ENCODE measurements at regions of chr17 and their contacts with region 1.

Region 1: GRCh38 chr17:58172369-58173071 is 5.7 kb downstream of the OR4D2 start:
- DNase-seq: peak in 8 of 9 experiments; percentile 19 to 82 (median 44)
- ATAC-seq: peak; percentile 76
- H3K4me3 ChIP-seq: no peak overlapping the region
- H3K4me3 Mint-ChIP-seq: peak overlapping the region; percentile 38
- H3K27ac ChIP-seq: peak overlapping the region in 1 of 2 experiments; percentile 72
- H3K27ac Mint-ChIP-seq: peak overlapping the region; percentile 66
- H3K4me1 ChIP-seq: peaks cover 43% of the 10 kb centered on the region
- H3K4me1 Mint-ChIP-seq: peaks cover 45% of the 10 kb centered on the region
- H3K27me3 ChIP-seq: no peaks in the 10 kb centered on the region
- H3K27me3 Mint-ChIP-seq: peaks cover 4% of the 10 kb centered on the region
- CTCF ChIP-seq: peak; percentile 66

Region 2: DNA sequence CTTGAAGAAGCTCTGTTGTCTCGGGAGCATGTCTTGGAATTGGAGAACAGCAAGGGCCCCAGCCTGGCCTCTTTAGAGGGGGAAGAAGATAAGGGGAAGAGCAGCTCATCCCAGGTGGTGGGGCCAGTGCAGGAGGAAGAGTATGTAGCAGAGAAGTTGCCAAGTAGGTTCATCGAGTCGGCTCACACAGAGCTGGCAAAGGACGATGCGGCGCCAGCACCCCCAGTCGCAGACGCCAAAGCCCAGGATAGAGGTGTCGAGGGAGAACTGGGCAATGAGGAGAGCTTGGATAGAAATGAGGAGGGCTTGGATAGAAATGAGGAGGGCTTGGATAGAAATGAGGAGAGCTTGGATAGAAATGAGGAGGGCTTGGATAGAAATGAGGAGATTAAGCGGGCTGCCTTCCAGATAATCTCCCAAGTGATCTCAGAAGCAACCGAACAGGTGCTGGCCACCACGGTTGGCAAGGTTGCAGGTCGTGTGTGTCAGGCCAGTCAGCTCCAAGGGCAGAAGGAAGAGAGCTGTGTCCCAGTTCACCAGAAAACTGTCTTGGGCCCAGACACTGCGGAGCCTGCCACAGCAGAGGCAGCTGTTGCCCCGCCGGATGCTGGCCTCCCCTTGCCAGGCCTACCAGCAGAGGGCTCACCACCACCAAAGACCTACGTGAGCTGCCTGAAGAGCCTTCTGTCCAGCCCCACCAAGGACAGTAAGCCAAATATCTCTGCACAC is 1066.2 kb before region 1 on chr17:
- CTCF ChIA-PET with region 1: no interaction called
- POLR2A ChIA-PET with region 1: no interaction called
- intact Hi-C with region 1: no loop called
- DNase-seq: no peak
- ATAC-seq: no peak
- H3K4me3 ChIP-seq: no peak overlapping the region
- H3K4me3 Mint-ChIP-seq: no peak overlapping the region
- H3K27ac ChIP-seq: no peak overlapping the region
- H3K27ac Mint-ChIP-seq: no peak overlapping the region
- H3K4me1 ChIP-seq: peaks cover 4% of the 10 kb centered on the region
- H3K4me1 Mint-ChIP-seq: peaks cover 17% of the 10 kb centered on the region
- H3K27me3 ChIP-seq: no peaks in the 10 kb centered on the region
- H3K27me3 Mint-ChIP-seq: no peaks in the 10 kb centered on the region
- CTCF ChIP-seq: no peak

Region 3: GRCh38 chr17:57855391-57856035 is 317.0 kb before region 1 on chr17:
- CTCF ChIA-PET with region 1: interaction called, 13 read pairs
- POLR2A ChIA-PET with region 1: interaction called, 3 read pairs
- intact Hi-C with region 1: loop called in 1 of 2 experiments (anchors 5 kb)
- DNase-seq: no peak
- ATAC-seq: no peak
- H3K4me3 ChIP-seq: no peak overlapping the region
- H3K4me3 Mint-ChIP-seq: no peak overlapping the region
- H3K27ac ChIP-seq: no peak overlapping the region
- H3K27ac Mint-ChIP-seq: no peak overlapping the region
- H3K4me1 ChIP-seq: peaks cover 15% of the 10 kb centered on the region
- H3K4me1 Mint-ChIP-seq: peaks cover 17% of the 10 kb centered on the region
- H3K27me3 ChIP-seq: no peaks in the 10 kb centered on the region
- H3K27me3 Mint-ChIP-seq: no peaks in the 10 kb centered on the region
- CTCF ChIP-seq: no peak

Region 4: DNA sequence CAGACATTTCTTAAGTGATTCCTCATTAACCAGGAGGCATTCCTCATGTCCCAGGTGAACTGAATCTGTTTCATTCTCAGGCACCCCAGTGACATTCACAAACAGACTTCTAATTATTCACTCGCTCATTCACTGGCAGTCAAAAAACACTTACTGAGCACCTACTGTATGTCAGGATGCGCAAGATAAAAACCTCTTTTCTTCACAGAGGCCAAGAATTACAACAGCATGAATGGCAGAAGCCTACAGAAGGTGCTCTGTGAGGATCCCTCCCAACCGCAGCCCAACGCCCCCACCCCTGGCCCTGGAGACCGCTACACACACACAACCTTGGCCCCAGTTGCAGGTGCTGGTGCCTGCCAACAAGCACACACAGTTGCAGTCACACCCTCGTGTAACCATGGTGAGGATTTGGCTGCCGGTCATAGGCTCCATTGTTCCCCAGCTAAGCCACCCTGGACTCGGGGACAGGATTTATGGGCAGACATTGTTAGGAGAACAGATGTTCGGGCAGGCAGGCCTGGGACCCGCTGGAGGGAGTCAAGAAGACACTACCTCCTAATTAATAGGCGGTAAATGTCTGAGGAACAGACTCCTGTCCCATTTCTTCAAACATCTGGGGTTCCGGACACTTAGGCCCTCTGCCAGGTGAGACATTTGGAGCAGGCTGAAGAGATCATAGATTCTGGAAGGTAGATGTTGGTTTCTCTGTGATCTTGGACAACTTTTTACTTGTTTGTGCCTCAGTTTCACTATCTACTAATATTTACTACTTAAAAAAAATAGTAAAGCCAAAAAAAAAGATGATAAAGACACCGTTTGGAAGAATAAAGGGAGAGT is 260.5 kb before region 1 on chr17:
- CTCF ChIA-PET with region 1: interaction called, 3 read pairs
- POLR2A ChIA-PET with region 1: interaction called, 3 read pairs
- intact Hi-C with region 1: loop called in 1 of 2 experiments (anchors 10 kb)
- DNase-seq: no peak
- ATAC-seq: no peak
- H3K4me3 ChIP-seq: no peak overlapping the region
- H3K4me3 Mint-ChIP-seq: no peak overlapping the region
- H3K27ac ChIP-seq: no peak overlapping the region
- H3K27ac Mint-ChIP-seq: no peak overlapping the region
- H3K4me1 ChIP-seq: no peaks in the 10 kb centered on the region
- H3K4me1 Mint-ChIP-seq: no peaks in the 10 kb centered on the region
- H3K27me3 ChIP-seq: no peaks in the 10 kb centered on the region
- H3K27me3 Mint-ChIP-seq: no peaks in the 10 kb centered on the region
- CTCF ChIP-seq: no peak

Region 5: DNA sequence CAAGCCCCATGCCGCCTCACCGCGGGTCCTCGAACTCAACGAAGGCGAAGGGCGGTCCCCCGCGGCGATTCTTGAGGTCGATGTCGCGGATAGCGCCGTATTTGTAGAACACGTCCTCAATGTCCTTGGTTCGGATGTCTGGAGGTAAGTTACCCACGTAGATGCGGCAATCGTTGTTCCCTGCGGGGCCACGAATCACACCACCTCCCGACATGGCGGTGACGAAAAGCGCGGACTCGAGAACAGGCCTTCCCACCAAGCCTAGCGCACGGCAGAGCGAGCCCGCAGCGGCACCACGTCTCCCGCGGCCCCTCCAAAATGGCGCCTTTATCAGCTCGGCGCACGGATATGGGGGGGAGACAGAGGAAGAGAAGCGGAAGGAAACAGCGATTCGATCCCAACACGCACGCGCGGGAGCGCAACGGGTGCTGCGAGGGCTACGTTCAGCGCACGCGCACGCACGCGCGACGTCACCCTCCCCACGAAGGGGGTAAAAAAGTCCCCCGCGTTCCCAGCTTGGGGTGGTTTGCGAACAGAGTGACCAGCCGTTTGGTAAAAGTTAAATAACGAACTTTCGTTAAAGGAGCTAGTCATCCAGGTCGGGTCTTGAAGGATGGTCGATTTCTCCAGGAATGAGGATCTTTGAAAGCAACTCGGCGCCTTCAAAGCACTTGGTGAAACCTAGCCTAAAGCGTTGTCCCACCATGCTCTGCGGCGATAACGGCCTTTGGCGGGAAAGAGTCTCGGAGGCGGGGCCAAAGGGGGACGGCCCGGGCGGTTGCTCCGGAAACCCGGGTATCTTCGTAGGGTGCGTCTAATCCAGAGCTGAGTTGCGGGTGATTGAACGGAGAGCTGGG is 165.4 kb before region 1 on chr17 and contains the start of gene SRSF1:
- CTCF ChIA-PET with region 1: interaction called, 3 read pairs
- POLR2A ChIA-PET with region 1: interaction called, 5 read pairs
- intact Hi-C with region 1: loop called in 1 of 2 experiments (anchors 1 kb)
- DNase-seq: peak; percentile 93 to 100 (median 98)
- ATAC-seq: peak; percentile 86
- H3K4me3 ChIP-seq: peak within 1 kb of the TSS; percentile 90 to 100
- H3K4me3 Mint-ChIP-seq: peak within 1 kb of the TSS; percentile 100
- H3K27ac ChIP-seq: peak within 1 kb of the TSS; percentile 85 to 97
- H3K27ac Mint-ChIP-seq: peak within 1 kb of the TSS; percentile 100
- H3K4me1 ChIP-seq: peaks cover 36% of the 10 kb centered on the region
- H3K4me1 Mint-ChIP-seq: peaks cover 55% of the 10 kb centered on the region
- H3K27me3 ChIP-seq: no peaks in the 10 kb centered on the region
- H3K27me3 Mint-ChIP-seq: no peaks in the 10 kb centered on the region
- CTCF ChIP-seq: no peak
- total RNA-seq, gene SRSF1: 79.2 to 94.1 TPM

Region 6: DNA sequence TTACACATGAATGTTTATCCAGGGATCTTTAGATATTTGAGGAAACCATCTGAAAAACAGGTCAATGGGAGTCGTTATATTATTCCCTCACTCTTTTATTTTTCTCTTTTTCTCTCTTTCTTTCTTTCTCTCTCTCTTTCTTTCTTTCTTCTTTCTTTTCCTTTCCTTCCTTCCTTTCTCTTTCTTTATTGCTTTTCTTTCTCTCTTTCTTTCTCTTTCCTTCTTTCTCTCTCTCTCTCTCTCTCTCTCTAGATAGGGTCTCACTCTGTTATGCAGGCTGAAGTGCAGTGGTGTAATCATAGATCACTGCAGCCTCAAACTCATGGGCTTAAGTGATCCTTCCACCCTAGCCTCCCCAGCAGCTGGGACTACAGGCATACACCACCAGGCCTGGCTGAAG is 44.7 kb before region 1 on chr17:
- CTCF ChIA-PET with region 1: interaction called, 217 read pairs
- POLR2A ChIA-PET with region 1: interaction called, 4 read pairs
- intact Hi-C with region 1: no loop called
- DNase-seq: no peak
- ATAC-seq: no peak
- H3K4me3 ChIP-seq: no peak overlapping the region
- H3K4me3 Mint-ChIP-seq: no peak overlapping the region
- H3K27ac ChIP-seq: no peak overlapping the region
- H3K27ac Mint-ChIP-seq: no peak overlapping the region
- H3K4me1 ChIP-seq: no peaks in the 10 kb centered on the region
- H3K4me1 Mint-ChIP-seq: peaks cover 6% of the 10 kb centered on the region
- H3K27me3 ChIP-seq: no peaks in the 10 kb centered on the region
- H3K27me3 Mint-ChIP-seq: no peaks in the 10 kb centered on the region
- CTCF ChIP-seq: no peak

Region 7: DNA sequence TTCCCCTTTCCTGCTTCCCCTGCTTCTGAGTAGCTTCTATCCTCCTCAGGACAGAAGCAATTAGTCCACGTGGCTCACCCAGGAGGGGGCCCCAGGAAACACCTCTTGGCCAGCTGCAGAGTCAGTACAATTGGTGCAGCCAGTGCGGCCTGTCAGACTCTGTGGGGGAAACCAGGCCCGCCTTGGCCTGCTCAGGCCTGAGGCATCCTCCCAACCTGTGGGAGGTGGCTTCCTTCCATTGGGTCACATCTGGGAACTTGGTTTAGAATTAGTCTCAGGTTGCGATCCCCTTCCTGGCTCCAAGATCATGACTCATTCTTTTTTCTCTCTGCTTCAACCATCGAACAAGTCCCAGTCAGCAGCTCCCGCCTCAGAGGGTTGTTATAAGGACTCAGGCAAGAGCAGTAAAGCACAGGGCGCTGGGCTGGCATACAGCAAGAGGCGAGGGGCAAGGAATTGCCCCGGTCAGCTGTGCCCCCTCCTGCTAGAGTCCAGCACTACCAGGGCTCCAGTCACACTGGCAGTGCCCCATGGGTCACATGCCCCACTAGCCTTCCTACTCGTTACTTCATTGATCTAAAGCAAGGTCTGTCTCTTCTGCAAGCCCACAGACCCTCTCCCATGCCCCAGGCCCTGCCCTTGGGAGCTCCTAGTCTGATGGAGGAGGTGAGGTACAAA is 11.9 kb after region 1 on chr17:
- CTCF ChIA-PET with region 1: interaction called, 46 read pairs
- POLR2A ChIA-PET with region 1: no interaction called
- intact Hi-C with region 1: no loop called
- DNase-seq: no peak
- ATAC-seq: no peak
- H3K4me3 ChIP-seq: no peak overlapping the region
- H3K4me3 Mint-ChIP-seq: no peak overlapping the region
- H3K27ac ChIP-seq: no peak overlapping the region
- H3K27ac Mint-ChIP-seq: no peak overlapping the region
- H3K4me1 ChIP-seq: no peaks in the 10 kb centered on the region
- H3K4me1 Mint-ChIP-seq: no peaks in the 10 kb centered on the region
- H3K27me3 ChIP-seq: no peaks in the 10 kb centered on the region
- H3K27me3 Mint-ChIP-seq: peaks cover 6% of the 10 kb centered on the region
- CTCF ChIP-seq: no peak

Measured in CD8-positive, alpha-beta T cell (primary cell).